ENCODE measurements at regions of chr4 and their contacts with region 1.

Region 1: DNA sequence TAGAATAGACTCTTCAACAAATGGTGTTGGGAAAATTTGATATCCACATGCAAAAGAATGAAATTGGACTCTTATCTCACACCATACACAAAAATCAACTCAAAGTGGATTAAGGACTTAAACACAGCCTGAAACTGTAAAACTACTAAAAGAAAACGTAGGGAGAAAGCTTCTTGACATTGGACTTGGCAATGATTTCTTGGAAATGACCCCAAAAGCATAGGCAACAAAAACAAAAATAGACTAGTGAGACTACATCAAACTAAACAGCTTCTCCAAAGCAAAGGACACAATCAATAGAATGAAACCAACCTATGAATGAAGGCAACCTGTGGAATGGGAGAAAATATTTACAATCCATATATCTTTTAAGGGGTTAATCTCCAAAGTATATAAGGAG is 94.7 kb upstream of the INTU start:
- DNase-seq: no peak
- ATAC-seq: no peak
- H3K4me3 ChIP-seq: no peak overlapping the region
- H3K27ac ChIP-seq: no peak overlapping the region
- H3K4me1 ChIP-seq: peaks cover 0 to 13% (median under 1%) of the 10 kb centered on the region in 12 donors
- H3K27me3 ChIP-seq: no peaks in the 10 kb centered on the region
- CTCF ChIP-seq: no peak
- POLR2A ChIP-seq: no peak

Region 2: GRCh38 chr4:127196655-127197352 is 341.2 kb before region 1 on chr4:
- intact Hi-C with region 1: loop called in 1 of 10 experiments (anchors 5 kb)
- DNase-seq: peak; percentile 25 to 49 (median 40)
- ATAC-seq: peak; percentile 87 to 99 (median 97)
- H3K4me3 ChIP-seq: no peak overlapping the region
- H3K27ac ChIP-seq: no peak overlapping the region
- H3K4me1 ChIP-seq: no peaks in the 10 kb centered on the region
- H3K27me3 ChIP-seq: no peaks in the 10 kb centered on the region
- CTCF ChIP-seq: no peak
- POLR2A ChIP-seq: no peak

Region 3: DNA sequence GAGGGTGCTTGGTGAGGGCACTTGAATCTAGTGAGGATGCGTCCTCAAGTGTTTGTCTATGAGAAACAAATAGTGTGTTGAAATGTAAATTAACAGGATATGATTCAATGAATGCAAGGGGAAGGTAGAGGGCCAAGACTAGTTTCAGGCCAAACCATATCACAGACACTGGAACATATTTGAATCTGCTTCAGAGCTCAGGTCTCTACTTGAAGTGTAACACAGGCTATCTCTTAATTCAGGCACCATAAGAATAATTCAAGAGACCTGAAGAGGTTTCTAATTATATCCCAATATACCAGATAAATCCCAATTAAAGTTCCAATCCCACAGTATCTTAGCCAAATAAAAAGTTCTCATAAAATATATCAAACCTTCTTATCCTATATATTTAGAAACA is 51.8 kb before region 1 on chr4:
- intact Hi-C with region 1: loop called in 1 of 10 experiments (anchors 5 kb)
- DNase-seq: no peak
- ATAC-seq: no peak
- H3K4me3 ChIP-seq: no peak overlapping the region
- H3K27ac ChIP-seq: no peak overlapping the region
- H3K4me1 ChIP-seq: peaks cover 0 to 4% (median 0%) of the 10 kb centered on the region in 12 donors
- H3K27me3 ChIP-seq: no peaks in the 10 kb centered on the region
- CTCF ChIP-seq: no peak
- POLR2A ChIP-seq: no peak